T-cell (primary cell): ENCODE measurements at regions of chr11 and their contacts with region 1.

Region 1: GRCh38 chr11:48001438-48002021 is 21.2 kb downstream of the PTPRJ start:
- DNase-seq: peak; percentile 56 to 96 (median 86)
- ATAC-seq: peak; percentile 94 to 96 (median 94)
- H3K4me3 ChIP-seq: peak overlapping the region in 1 of 2 donors; percentile 5
- H3K4me3 Mint-ChIP-seq: peak overlapping the region; percentile 57 to 73 (median 65)
- H3K27ac ChIP-seq: peak overlapping the region; percentile 92
- H3K27ac Mint-ChIP-seq: peak overlapping the region; percentile 92 to 100
- H3K4me1 ChIP-seq: peaks cover 72 to 91% of the 10 kb centered on the region in 2 experiments
- H3K4me1 Mint-ChIP-seq: peaks cover 86 to 97% (median 87%) of the 10 kb centered on the region in 3 donors
- H3K27me3 ChIP-seq: no peaks in the 10 kb centered on the region
- H3K27me3 Mint-ChIP-seq: no peaks in the 10 kb centered on the region

Region 2: DNA sequence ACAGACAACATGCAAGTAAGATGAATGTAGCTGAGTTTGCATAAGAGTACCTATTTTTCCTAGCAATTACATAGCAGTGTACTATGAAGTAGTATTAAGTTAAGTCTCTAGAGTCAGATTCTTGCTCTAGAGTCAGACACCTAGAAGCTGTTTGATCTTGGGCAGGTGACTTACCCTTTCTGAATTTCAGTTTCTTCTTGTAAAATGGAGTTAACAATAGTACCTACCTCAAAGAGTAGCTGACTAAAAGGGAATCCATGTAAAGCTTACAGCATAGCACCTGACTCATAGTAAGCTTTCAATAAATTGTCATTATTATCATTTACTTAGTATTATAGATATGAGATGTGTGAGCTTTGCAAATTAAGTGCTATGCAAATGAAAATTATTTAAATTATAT is 69.0 kb before region 1 on chr11:
- CTCF ChIA-PET with region 1: interaction called in 1 of 2 experiments, 10 read pairs
- POLR2A ChIA-PET with region 1: no interaction called
- DNase-seq: no peak
- ATAC-seq: no peak
- H3K4me3 ChIP-seq: no peak overlapping the region
- H3K4me3 Mint-ChIP-seq: no peak overlapping the region
- H3K27ac ChIP-seq: no peak overlapping the region
- H3K27ac Mint-ChIP-seq: no peak overlapping the region
- H3K4me1 ChIP-seq: peaks cover 7 to 10% of the 10 kb centered on the region in 2 experiments
- H3K4me1 Mint-ChIP-seq: peaks cover 10 to 22% (median 20%) of the 10 kb centered on the region in 3 donors
- H3K27me3 ChIP-seq: no peaks in the 10 kb centered on the region
- H3K27me3 Mint-ChIP-seq: no peaks in the 10 kb centered on the region

Region 3: DNA sequence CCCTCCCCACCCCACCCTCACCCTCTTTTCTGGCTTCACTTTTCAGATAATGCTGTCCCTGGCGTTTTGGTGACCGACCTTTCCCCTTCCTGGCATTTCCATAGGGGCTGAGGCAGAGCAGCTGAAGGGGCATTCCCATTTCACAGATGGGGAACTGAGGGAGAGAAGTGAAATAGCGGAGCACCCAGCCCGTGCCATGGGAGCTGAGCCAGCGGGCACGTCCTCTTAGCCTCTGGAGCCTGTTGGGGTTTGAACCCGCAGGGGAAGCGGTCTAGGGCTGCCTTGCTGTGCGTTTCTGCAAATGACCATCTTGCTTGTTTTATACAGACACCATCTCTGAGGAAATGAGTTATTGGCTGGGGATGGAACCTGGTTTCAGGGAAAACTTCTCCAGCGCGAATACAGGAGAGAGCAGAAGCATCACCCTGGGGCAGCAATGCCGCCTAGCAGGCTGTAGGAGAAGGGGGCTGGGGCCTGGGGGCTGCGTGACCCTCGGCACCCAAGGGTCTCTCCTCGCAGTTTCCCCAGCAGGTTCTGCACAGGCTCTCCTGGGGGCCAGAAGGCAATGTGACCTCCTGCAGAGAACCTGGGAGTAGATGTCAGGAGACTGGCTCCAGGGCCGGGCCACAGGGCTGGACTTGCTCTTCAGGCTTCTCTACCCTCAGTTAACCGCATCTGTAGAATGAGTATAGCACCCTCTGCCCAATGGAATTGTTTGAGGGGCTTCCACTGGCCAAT is 19.7 kb before region 1 on chr11:
- CTCF ChIA-PET with region 1: interaction called in 1 of 2 experiments, 15 read pairs
- POLR2A ChIA-PET with region 1: interaction called, 8 to 9 read pairs
- DNase-seq: peak in 2 of 35 experiments; percentile 22 to 32
- ATAC-seq: no peak
- H3K4me3 ChIP-seq: peak overlapping the region; percentile 55 to 69
- H3K4me3 Mint-ChIP-seq: peak overlapping the region; percentile 82 to 94 (median 91)
- H3K27ac ChIP-seq: no peak overlapping the region
- H3K27ac Mint-ChIP-seq: peak overlapping the region; percentile 76 to 90
- H3K4me1 ChIP-seq: peaks cover 21 to 43% of the 10 kb centered on the region in 2 experiments
- H3K4me1 Mint-ChIP-seq: peaks cover 41 to 49% (median 45%) of the 10 kb centered on the region in 3 donors
- H3K27me3 ChIP-seq: no peaks in the 10 kb centered on the region
- H3K27me3 Mint-ChIP-seq: no peaks in the 10 kb centered on the region

Region 4: GRCh38 chr11:48013269-48013901 is 11.9 kb after region 1 on chr11:
- CTCF ChIA-PET with region 1: interaction called, 3 to 7 read pairs
- POLR2A ChIA-PET with region 1: interaction called, 3 to 12 read pairs
- DNase-seq: peak in 30 of 35 experiments; percentile 17 to 70 (median 40)
- ATAC-seq: peak; percentile 26 to 56 (median 44)
- H3K4me3 ChIP-seq: no peak overlapping the region
- H3K4me3 Mint-ChIP-seq: peak overlapping the region; percentile 43 to 69 (median 49)
- H3K27ac ChIP-seq: peak overlapping the region; percentile 98
- H3K27ac Mint-ChIP-seq: peak overlapping the region; percentile 93 to 98
- H3K4me1 ChIP-seq: peaks cover 25 to 100% of the 10 kb centered on the region in 2 experiments
- H3K4me1 Mint-ChIP-seq: peaks cover 66 to 89% (median 86%) of the 10 kb centered on the region in 3 donors
- H3K27me3 ChIP-seq: no peaks in the 10 kb centered on the region
- H3K27me3 Mint-ChIP-seq: no peaks in the 10 kb centered on the region

Region 5: GRCh38 chr11:48018528-48019216 is 17.1 kb after region 1 on chr11:
- CTCF ChIA-PET with region 1: interaction called, 7 to 8 read pairs
- POLR2A ChIA-PET with region 1: interaction called, 5 to 11 read pairs
- DNase-seq: no peak
- ATAC-seq: no peak
- H3K4me3 ChIP-seq: no peak overlapping the region
- H3K4me3 Mint-ChIP-seq: peak overlapping the region; percentile 17 to 55 (median 50)
- H3K27ac ChIP-seq: peak overlapping the region; percentile 98
- H3K27ac Mint-ChIP-seq: peak overlapping the region; percentile 84
- H3K4me1 ChIP-seq: peaks cover 18 to 82% of the 10 kb centered on the region in 2 experiments
- H3K4me1 Mint-ChIP-seq: peaks cover 70 to 91% (median 81%) of the 10 kb centered on the region in 3 donors
- H3K27me3 ChIP-seq: no peaks in the 10 kb centered on the region
- H3K27me3 Mint-ChIP-seq: no peaks in the 10 kb centered on the region

Region 6: DNA sequence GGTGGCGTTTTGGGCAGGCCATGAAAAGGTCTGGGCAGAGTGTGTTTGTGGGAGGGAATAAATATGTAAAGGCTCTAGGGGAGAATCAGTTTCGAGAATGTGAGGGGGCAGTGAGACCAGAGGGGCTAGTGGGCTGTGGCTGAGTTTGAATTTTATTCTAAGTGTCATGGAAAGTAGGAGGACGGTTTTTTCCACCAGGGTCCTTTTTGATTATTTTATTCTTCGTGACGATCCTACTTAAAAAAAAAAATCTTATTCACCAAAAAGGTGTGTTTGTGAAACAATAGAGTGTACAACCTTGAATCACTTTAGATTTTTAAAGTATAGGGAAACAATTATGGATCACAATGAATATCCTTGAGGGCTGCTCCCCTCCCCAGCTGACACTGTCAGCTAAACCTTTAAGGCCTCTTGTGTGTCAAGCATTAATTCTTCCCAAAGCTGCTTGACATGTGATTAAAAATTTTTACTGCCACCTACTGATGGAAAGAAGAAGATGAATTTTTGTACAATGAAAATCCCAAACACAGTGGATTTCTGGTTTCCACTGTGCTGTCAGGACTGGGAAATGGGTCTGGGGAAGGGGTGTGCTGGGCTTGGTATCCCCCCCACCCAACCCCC is 107.6 kb after region 1 on chr11:
- CTCF ChIA-PET with region 1: interaction called, 3 to 19 read pairs
- POLR2A ChIA-PET with region 1: no interaction called
- DNase-seq: peak in 1 of 35 experiments; percentile 61
- ATAC-seq: peak; percentile 37 to 52 (median 50)
- H3K4me3 ChIP-seq: peak overlapping the region; percentile 40 to 43
- H3K4me3 Mint-ChIP-seq: peak overlapping the region in 2 of 3 donors; percentile 22 to 78
- H3K27ac ChIP-seq: peak overlapping the region; percentile 60
- H3K27ac Mint-ChIP-seq: peak overlapping the region; percentile 81 to 88
- H3K4me1 ChIP-seq: peaks cover 16 to 38% of the 10 kb centered on the region in 2 experiments
- H3K4me1 Mint-ChIP-seq: peaks cover 51 to 58% (median 52%) of the 10 kb centered on the region in 3 donors
- H3K27me3 ChIP-seq: no peaks in the 10 kb centered on the region
- H3K27me3 Mint-ChIP-seq: no peaks in the 10 kb centered on the region